ENCODE measurements at regions of chr16 and their contacts with region 1.

Region 1: GRCh38 chr16:19067349-19068236 is at the start of gene COQ7:
- DNase-seq: peak; percentile 97
- H3K4me3 Mint-ChIP-seq: peak within 1 kb of the TSS; percentile 84
- H3K27ac Mint-ChIP-seq: peak within 1 kb of the TSS; percentile 98
- H3K4me1 Mint-ChIP-seq: peaks cover 21% of the 10 kb centered on the region
- H3K27me3 Mint-ChIP-seq: peaks cover 1% of the 10 kb centered on the region
- total RNA-seq, gene COQ7: 17.3 and 19.6 TPM in 2 replicates

Region 2: GRCh38 chr16:18789850-18790724 is 277.5 kb before region 1 on chr16 and contains the start of gene RPS15A:
- intact Hi-C with region 1: loop called (anchors 1 kb)
- DNase-seq: peak; percentile 92
- H3K4me3 Mint-ChIP-seq: peak within 1 kb of the TSS; percentile 95
- H3K27ac Mint-ChIP-seq: peak within 1 kb of the TSS; percentile 85
- H3K4me1 Mint-ChIP-seq: peaks cover 64% of the 10 kb centered on the region
- H3K27me3 Mint-ChIP-seq: peaks cover 1% of the 10 kb centered on the region
- total RNA-seq, gene RPS15A: 1,849 and 1,857 TPM in 2 replicates

Region 3: DNA sequence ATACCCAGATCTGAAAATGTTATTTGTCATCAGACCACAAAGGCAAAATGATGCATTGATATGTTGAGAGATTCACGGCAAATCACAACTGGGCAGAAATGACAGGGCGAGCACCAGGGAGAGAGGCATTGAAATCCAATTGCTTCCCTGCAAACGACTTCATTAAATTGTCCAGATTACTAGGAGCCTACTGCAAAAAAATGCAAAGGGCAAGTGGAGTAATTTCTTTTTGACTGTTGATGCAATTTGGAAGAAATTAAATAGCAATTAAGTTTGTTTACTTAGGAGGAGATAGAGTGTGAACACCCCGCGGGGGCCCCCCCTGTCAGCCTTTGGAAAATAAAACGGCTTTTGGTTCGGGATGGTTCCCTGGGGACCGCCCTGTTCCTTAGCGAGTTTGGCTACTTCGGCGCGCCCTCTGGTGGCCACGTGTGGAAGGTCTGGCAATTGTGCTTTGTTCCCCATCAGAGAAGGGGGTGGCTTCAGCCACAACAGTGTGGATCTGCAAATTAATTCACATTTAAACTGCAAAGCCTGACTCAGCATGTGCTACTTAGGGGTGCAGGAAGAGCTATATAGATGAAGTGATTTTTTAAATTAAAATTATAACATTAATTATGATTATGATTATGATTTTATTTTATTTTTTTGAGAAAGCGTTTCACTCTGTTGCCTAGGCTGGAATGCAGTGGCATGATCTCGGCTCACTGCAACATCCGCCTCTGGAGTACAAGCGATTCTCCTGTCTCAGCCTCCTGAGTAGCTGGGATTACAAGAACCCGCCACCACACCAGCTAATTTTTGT is 98.3 kb before region 1 on chr16:
- intact Hi-C with region 1: loop called (anchors 5 kb)
- DNase-seq: peak; percentile 73
- H3K4me3 Mint-ChIP-seq: peak overlapping the region; percentile 59
- H3K27ac Mint-ChIP-seq: no peak overlapping the region
- H3K4me1 Mint-ChIP-seq: peaks cover 12% of the 10 kb centered on the region
- H3K27me3 Mint-ChIP-seq: peaks cover 5% of the 10 kb centered on the region

Region 4: GRCh38 chr16:19029980-19030379 is 37.6 kb before region 1 on chr16:
- intact Hi-C with region 1: no loop called
- DNase-seq: no peak
- H3K4me3 Mint-ChIP-seq: no peak overlapping the region
- H3K27ac Mint-ChIP-seq: no peak overlapping the region
- H3K4me1 Mint-ChIP-seq: no peaks in the 10 kb centered on the region
- H3K27me3 Mint-ChIP-seq: no peaks in the 10 kb centered on the region

Region 5: DNA sequence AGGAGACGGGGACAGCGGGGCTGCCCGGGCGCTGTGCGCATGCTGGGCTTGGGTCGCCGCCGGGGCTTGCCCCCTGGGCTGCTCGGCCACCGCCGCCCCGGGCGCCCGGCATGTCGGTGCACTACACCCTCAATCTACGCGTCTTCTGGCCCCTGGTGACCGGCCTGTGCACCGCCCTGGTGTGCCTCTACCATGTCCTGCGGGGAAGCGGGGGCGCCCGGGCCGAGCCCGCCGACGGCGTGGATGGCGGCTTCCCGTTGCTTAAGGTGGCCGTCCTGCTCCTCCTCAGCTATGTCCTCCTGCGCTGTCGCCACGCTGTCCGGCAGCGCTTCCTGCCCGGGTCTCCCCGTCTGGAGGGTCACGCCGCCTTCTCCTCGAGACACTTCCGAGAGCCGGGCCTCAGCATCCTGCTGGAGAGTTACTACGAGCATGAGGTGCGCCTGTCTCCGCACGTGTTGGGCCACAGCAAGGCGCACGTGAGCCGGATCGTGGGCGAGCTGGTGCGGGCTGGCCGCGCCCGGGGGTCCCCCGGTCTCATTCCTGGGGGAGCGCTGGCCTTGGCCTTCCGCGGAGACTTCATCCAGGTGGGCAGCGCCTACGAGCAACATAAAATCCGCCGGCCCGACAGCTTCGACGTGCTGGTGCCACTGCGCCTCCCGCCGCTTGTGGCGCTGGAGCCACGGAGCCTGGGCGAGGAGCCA is 46.9 kb after region 1 on chr16:
- intact Hi-C with region 1: loop called (anchors 1 kb)
- DNase-seq: no peak
- H3K4me3 Mint-ChIP-seq: peak overlapping the region; percentile 82
- H3K27ac Mint-ChIP-seq: peak overlapping the region; percentile 75
- H3K4me1 Mint-ChIP-seq: peaks cover 37% of the 10 kb centered on the region
- H3K27me3 Mint-ChIP-seq: peaks cover 19% of the 10 kb centered on the region

Region 6: GRCh38 chr16:19521471-19522396 is 454.1 kb after region 1 on chr16 and contains the start of gene GDE1:
- intact Hi-C with region 1: loop called (anchors 1 kb)
- DNase-seq: peak; percentile 91
- H3K4me3 Mint-ChIP-seq: peak within 1 kb of the TSS; percentile 91
- H3K27ac Mint-ChIP-seq: peak within 1 kb of the TSS; percentile 91
- H3K4me1 Mint-ChIP-seq: peaks cover 56% of the 10 kb centered on the region
- H3K27me3 Mint-ChIP-seq: no peaks in the 10 kb centered on the region
- total RNA-seq, gene GDE1: 24.1 and 29.5 TPM in 2 replicates

Region 7: DNA sequence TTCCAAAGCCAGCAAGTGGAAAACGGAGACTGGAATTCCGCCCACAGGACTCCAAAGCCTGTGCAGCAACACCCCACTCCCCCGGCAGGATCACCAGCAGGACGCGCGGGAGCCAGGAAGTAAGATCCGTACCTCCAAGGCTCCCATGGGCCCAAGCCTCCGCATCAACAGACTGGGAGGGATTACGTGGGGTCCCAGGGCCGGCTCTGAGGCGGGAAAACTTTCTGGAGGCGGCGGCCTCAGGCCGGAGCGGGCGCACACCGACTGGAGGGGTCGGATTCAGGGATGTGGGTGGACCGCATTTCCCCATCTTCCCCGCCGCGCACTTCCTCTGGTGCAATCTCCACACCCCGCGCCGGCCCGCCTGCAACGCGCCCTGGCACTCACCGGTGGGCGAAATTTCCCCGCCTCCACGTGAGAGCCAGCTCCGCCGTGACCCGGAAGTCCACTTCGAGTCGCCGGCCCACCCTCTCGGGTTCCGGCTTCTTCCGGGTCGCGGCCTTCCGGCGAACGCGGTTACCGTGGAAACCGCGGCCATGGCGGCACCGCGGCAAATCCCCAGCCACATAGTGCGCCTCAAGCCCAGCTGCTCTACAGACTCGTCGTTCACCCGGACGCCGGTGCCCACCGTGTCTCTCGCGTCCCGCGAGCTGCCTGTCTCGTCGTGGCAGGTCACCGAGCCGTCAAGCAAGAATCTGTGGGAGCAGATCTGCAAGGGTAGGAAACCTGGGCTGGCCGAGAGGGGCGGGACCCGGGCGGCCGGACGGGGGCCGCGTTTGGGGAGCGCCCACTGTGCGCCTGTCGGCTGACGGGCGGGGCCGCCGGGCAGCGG is 650.4 kb after region 1 on chr16 and contains the starts of genes IQCK and KNOP1:
- intact Hi-C with region 1: loop called (anchors 2 kb)
- DNase-seq: peak; percentile 87
- H3K4me3 Mint-ChIP-seq: peak within 1 kb of the TSS; percentile 95
- H3K27ac Mint-ChIP-seq: peak within 1 kb of the TSS; percentile 88
- H3K4me1 Mint-ChIP-seq: peaks cover 28% of the 10 kb centered on the region
- H3K27me3 Mint-ChIP-seq: no peaks in the 10 kb centered on the region
- total RNA-seq, gene IQCK: 1.1 and 2.0 TPM in 2 replicates
- total RNA-seq, gene KNOP1: 35.3 and 36.0 TPM in 2 replicates